ENCODE measurements at regions of chr17 and their contacts with region 1.

Region 1: DNA sequence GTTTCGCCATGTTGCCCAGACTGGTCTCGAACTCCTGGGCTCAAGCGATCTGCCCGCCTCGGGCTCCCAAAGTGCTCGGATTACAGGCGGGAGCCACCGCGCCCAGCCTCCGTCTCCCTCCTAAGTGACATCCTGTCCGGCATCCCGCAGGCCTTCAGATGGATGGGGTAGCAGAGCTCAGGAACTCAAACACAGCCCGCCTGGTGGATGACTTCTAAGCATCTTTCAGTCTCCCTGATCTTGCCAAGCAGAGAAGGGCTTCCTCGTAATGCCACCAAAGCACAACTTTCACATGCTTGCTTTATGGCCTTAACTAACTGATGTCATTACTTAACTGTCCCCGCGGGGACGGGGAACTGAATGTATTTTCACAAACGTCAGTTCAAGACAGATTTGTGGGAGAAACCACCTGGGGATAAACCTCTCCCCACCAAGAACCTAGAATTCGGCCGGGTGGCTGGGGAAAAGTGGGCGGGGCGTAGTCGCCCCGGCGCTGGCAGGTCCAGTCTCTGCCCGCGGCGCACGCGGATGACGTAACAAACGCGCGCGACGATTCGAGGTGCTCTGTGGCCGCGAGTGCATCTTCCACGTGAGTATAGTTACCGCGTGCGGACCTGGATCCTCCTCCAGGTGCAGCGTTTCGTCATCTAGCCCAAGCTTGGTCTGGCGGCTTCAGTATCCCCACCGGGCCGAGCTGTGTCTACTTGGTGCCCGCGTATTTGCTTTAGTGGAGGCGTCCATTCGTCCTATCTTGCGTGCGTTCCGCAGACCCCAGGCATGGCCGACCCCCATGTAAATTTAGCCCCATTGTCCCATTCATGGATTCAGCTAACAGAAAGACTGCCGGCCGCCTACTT is at the start of gene PFAS:
- DNase-seq: peak; percentile 97
- H3K4me3 Mint-ChIP-seq: peak within 1 kb of the TSS; percentile 99
- H3K27ac Mint-ChIP-seq: peak within 1 kb of the TSS; percentile 100
- H3K4me1 Mint-ChIP-seq: peaks cover 37% of the 10 kb centered on the region
- H3K27me3 Mint-ChIP-seq: no peaks in the 10 kb centered on the region
- total RNA-seq, gene PFAS: 106 to 110 TPM

Region 2: DNA sequence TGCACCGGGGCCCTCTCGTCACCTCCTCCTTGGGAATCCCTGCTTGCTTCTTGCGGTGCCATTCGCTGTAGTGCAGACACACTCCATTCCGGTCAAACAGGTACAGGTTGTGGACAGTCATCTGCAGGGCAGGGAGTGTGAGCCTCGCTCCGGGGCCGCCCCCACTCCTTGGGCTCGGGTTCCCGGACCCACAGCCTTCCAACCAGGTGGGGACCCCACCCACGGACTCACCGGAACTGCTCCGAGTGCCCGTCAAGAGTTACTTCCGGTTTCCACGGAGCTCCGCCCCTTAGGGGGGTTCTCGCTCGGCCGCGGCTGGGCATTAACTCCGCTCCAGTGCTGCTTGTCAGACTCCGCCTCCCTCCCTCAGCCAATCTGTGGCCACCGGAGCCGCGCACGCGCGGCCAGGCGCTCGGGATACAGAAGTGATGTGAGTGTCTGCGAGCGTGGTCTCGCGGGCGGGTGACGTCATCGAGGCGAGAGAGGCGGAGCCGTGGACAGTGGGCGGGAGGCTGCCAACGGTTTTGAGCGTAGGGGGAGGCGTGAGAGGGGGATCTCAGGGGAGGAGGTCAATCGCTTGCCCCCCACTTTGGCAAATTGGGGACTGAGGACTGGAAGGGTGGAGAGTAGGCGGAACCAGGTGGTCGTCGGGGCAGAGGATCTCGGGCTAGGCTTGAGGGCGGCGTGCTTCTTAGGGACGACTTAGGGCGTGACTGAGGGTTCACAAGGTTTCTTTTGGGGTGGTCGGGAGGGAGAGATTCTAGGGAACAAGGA is 317.1 kb before region 1 on chr17 and contains the starts of genes CNTROB and TRAPPC1:
- CTCF ChIA-PET with region 1: no interaction called
- intact Hi-C with region 1: loop called (anchors 5 kb)
- DNase-seq: peak; percentile 100
- H3K4me3 Mint-ChIP-seq: peak within 1 kb of the TSS; percentile 91
- H3K27ac Mint-ChIP-seq: peak within 1 kb of the TSS; percentile 87
- H3K4me1 Mint-ChIP-seq: peaks cover 38% of the 10 kb centered on the region
- H3K27me3 Mint-ChIP-seq: no peaks in the 10 kb centered on the region
- total RNA-seq, gene CNTROB: 49.3 to 56.3 TPM
- total RNA-seq, gene TRAPPC1: 162 to 172 TPM

Region 3: GRCh38 chr17:8288336-8289102 is 39.5 kb after region 1 on chr17 and contains the start of gene RANGRF:
- CTCF ChIA-PET with region 1: no interaction called
- intact Hi-C with region 1: loop called (anchors 1 kb)
- DNase-seq: peak; percentile 91
- H3K4me3 Mint-ChIP-seq: peak within 1 kb of the TSS; percentile 88
- H3K27ac Mint-ChIP-seq: peak within 1 kb of the TSS; percentile 93
- H3K4me1 Mint-ChIP-seq: peaks cover 25% of the 10 kb centered on the region
- H3K27me3 Mint-ChIP-seq: no peaks in the 10 kb centered on the region
- total RNA-seq, gene RANGRF: 36.9 to 39.1 TPM

Region 4: GRCh38 chr17:8435245-8436168 is 186.5 kb after region 1 on chr17 and contains the start of gene NDEL1:
- CTCF ChIA-PET with region 1: no interaction called
- intact Hi-C with region 1: loop called (anchors 2 kb)
- DNase-seq: peak; percentile 99
- H3K4me3 Mint-ChIP-seq: peak within 1 kb of the TSS; percentile 96
- H3K27ac Mint-ChIP-seq: peak within 1 kb of the TSS; percentile 93
- H3K4me1 Mint-ChIP-seq: peaks cover 32% of the 10 kb centered on the region
- H3K27me3 Mint-ChIP-seq: no peaks in the 10 kb centered on the region
- total RNA-seq, gene NDEL1: 43.1 to 47.1 TPM

Measured in activated naive CD4-positive, alpha-beta T cell treated with anti-CD3 and anti-CD28 coated beads for 36 hours (primary cell).